ENCODE measurements at regions of chr4 and their contacts with region 1.

Region 1: GRCh38 chr4:170259631-170260153 is 169.9 kb upstream of the AADAT start:
- DNase-seq: peak; percentile 84
- H3K4me3 ChIP-seq: no peak overlapping the region
- H3K27ac ChIP-seq: no peak overlapping the region
- H3K4me1 ChIP-seq: no peaks in the 10 kb centered on the region
- H3K27me3 ChIP-seq: no peaks in the 10 kb centered on the region
- CTCF ChIP-seq: peak; percentile 61 to 89 (median 80)
- POLR2A ChIP-seq: no peak

Region 2: DNA sequence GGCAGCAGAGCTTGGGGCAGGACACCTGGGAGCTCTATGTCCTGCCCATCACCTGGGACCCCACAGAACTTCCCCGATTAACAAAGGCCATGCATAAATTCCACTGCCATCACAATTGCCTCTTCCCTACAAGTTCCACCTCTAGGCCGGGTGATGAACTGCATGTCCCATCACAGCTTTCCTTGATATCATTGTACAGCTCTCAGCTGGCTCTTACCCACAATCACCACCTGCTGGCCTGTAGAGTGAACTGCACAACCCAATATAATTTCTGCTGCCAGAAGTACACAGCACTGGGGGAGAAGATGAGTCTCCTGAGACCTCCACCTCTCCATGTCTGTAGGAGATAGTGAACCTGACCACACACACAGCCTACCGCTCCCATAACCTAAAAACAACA is 115.1 kb after region 1 on chr4:
- intact Hi-C with region 1: no loop called
- DNase-seq: no peak
- H3K4me3 ChIP-seq: no peak overlapping the region
- H3K27ac ChIP-seq: no peak overlapping the region
- H3K4me1 ChIP-seq: no peaks in the 10 kb centered on the region
- H3K27me3 ChIP-seq: no peaks in the 10 kb centered on the region
- CTCF ChIP-seq: peak in 2 of 4 experiments; percentile 12 to 19
- POLR2A ChIP-seq: no peak

Region 3: DNA sequence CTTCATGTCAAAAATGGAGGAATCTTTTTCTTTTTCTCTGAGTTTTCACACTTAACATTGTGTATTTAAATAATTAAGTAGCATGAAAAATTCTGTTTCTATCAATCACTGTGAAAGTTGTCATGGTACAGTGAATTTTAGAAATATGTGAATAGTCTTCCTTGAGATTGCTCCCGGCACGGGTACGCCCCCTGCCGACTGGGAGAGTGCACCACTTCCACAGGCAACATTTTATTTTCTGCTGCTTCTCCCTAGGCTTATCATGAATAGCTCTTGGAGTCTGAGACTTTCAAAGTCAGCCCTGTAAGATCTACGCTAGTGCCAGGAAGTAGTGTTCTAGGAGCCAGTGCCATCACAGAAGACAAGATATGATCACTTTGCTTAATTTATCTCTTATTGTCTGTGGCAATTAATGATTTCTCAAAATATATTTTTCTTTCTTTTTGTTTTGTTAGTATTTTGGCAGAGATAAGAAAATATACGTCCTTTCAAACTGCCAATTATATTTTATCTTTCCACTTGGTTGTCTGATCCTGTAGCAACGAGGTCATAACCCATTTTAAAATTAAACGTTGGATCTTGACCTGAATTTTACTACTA is 593.8 kb after region 1 on chr4:
- intact Hi-C with region 1: loop called (anchors 10 kb)
- DNase-seq: peak; percentile 10
- H3K4me3 ChIP-seq: no peak overlapping the region
- H3K27ac ChIP-seq: no peak overlapping the region
- H3K4me1 ChIP-seq: no peaks in the 10 kb centered on the region
- H3K27me3 ChIP-seq: no peaks in the 10 kb centered on the region
- CTCF ChIP-seq: peak in 3 of 4 experiments; percentile 38 to 59 (median 56)
- POLR2A ChIP-seq: no peak